ENCODE measurements at regions of chr5 and their contacts with region 1.

Region 1: GRCh38 chr5:178496642-178497041 is 93.6 kb downstream of the COL23A1 start:
- DNase-seq: no peak
- H3K4me3 ChIP-seq: no peak overlapping the region
- H3K27ac ChIP-seq: no peak overlapping the region
- H3K4me1 ChIP-seq: no peaks in the 10 kb centered on the region
- H3K27me3 ChIP-seq: no peaks in the 10 kb centered on the region
- CTCF ChIP-seq: no peak
- EP300 ChIP-seq: no peak
- POLR2A ChIP-seq: no peak

Region 2: GRCh38 chr5:178535299-178536175 is 38.9 kb after region 1 on chr5:
- intact Hi-C with region 1: no loop called
- DNase-seq: peak in 3 of 5 donors; percentile 45 to 78 (median 57)
- H3K4me3 ChIP-seq: no peak overlapping the region
- H3K27ac ChIP-seq: no peak overlapping the region
- H3K4me1 ChIP-seq: peaks cover 6% of the 10 kb centered on the region
- H3K27me3 ChIP-seq: no peaks in the 10 kb centered on the region
- CTCF ChIP-seq: no peak
- EP300 ChIP-seq: no peak
- POLR2A ChIP-seq: no peak

Region 3: GRCh38 chr5:179243333-179243732 is 746.7 kb after region 1 on chr5:
- intact Hi-C with region 1: loop called in 1 of 4 experiments (anchors 5 kb)
- DNase-seq: peak in 2 of 5 donors; percentile 5 to 21
- H3K4me3 ChIP-seq: no peak overlapping the region
- H3K27ac ChIP-seq: no peak overlapping the region
- H3K4me1 ChIP-seq: peaks cover 3% of the 10 kb centered on the region
- H3K27me3 ChIP-seq: no peaks in the 10 kb centered on the region
- CTCF ChIP-seq: no peak
- EP300 ChIP-seq: no peak
- POLR2A ChIP-seq: no peak